B cell (primary cell): ENCODE measurements at regions of chr17 and their contacts with region 1.

Region 1: GRCh38 chr17:3913531-3914311 is 2.5 kb downstream of the P2RX1 start:
- DNase-seq: peak; percentile 93
- ATAC-seq: peak; percentile 57
- H3K4me3 ChIP-seq: peak overlapping the region; percentile 48 to 72 (median 57)
- H3K4me3 Mint-ChIP-seq: peak overlapping the region; percentile 90
- H3K27ac ChIP-seq: peak overlapping the region; percentile 100
- H3K27ac Mint-ChIP-seq: peak overlapping the region; percentile 98
- H3K4me1 ChIP-seq: peaks cover 72 to 92% of the 10 kb centered on the region in 2 donors
- H3K4me1 Mint-ChIP-seq: peaks cover 80% of the 10 kb centered on the region
- H3K27me3 ChIP-seq: no peaks in the 10 kb centered on the region
- H3K27me3 Mint-ChIP-seq: no peaks in the 10 kb centered on the region
- CTCF ChIP-seq: peak; percentile 97

Region 2: GRCh38 chr17:3695723-3696411 is 217.9 kb before region 1 on chr17 and contains the start of gene P2RX5:
- CTCF ChIA-PET with region 1: interaction called, 3 read pairs
- POLR2A ChIA-PET with region 1: no interaction called
- intact Hi-C with region 1: loop called (anchors 5 kb)
- DNase-seq: peak; percentile 80
- ATAC-seq: peak; percentile 52
- H3K4me3 ChIP-seq: peak within 1 kb of the TSS; percentile 58 to 93 (median 83)
- H3K4me3 Mint-ChIP-seq: peak within 1 kb of the TSS; percentile 100
- H3K27ac ChIP-seq: peak within 1 kb of the TSS; percentile 76 to 91
- H3K27ac Mint-ChIP-seq: peak within 1 kb of the TSS; percentile 99
- H3K4me1 ChIP-seq: peaks cover 35 to 65% of the 10 kb centered on the region in 2 donors
- H3K4me1 Mint-ChIP-seq: peaks cover 61% of the 10 kb centered on the region
- H3K27me3 ChIP-seq: no peaks in the 10 kb centered on the region
- H3K27me3 Mint-ChIP-seq: no peaks in the 10 kb centered on the region
- CTCF ChIP-seq: no peak
- total RNA-seq, gene P2RX5: 405 and 410 TPM in 2 replicates

Region 3: GRCh38 chr17:3845621-3846441 is 67.9 kb before region 1 on chr17 and contains the start of gene NCBP3:
- CTCF ChIA-PET with region 1: interaction called, 16 read pairs
- POLR2A ChIA-PET with region 1: interaction called, 3 read pairs
- intact Hi-C with region 1: loop called (anchors 1 kb)
- DNase-seq: peak; percentile 96
- ATAC-seq: peak; percentile 97
- H3K4me3 ChIP-seq: peak within 1 kb of the TSS; percentile 54 to 96 (median 90)
- H3K4me3 Mint-ChIP-seq: peak within 1 kb of the TSS; percentile 92
- H3K27ac ChIP-seq: peak within 1 kb of the TSS; percentile 72 to 94
- H3K27ac Mint-ChIP-seq: peak within 1 kb of the TSS; percentile 86
- H3K4me1 ChIP-seq: peaks cover 10 to 20% of the 10 kb centered on the region in 2 donors
- H3K4me1 Mint-ChIP-seq: peaks cover 23% of the 10 kb centered on the region
- H3K27me3 ChIP-seq: no peaks in the 10 kb centered on the region
- H3K27me3 Mint-ChIP-seq: no peaks in the 10 kb centered on the region
- CTCF ChIP-seq: peak; percentile 90
- total RNA-seq, gene NCBP3: 70.7 and 71.7 TPM in 2 replicates

Region 4: GRCh38 chr17:3893003-3893719 is 20.6 kb before region 1 on chr17 and contains the start of gene CAMKK1:
- CTCF ChIA-PET with region 1: interaction called, 48 read pairs
- POLR2A ChIA-PET with region 1: interaction called, 15 read pairs
- intact Hi-C with region 1: loop called (anchors 1 kb)
- DNase-seq: peak; percentile 95
- ATAC-seq: peak; percentile 86
- H3K4me3 ChIP-seq: peak within 1 kb of the TSS; percentile 14 to 75 (median 64)
- H3K4me3 Mint-ChIP-seq: peak within 1 kb of the TSS; percentile 93
- H3K27ac ChIP-seq: peak within 1 kb of the TSS; percentile 56 to 57
- H3K27ac Mint-ChIP-seq: peak within 1 kb of the TSS; percentile 89
- H3K4me1 ChIP-seq: peaks cover 20 to 42% of the 10 kb centered on the region in 2 donors
- H3K4me1 Mint-ChIP-seq: peaks cover 40% of the 10 kb centered on the region
- H3K27me3 ChIP-seq: no peaks in the 10 kb centered on the region
- H3K27me3 Mint-ChIP-seq: no peaks in the 10 kb centered on the region
- CTCF ChIP-seq: no peak
- total RNA-seq, gene CAMKK1: 35.9 and 37.1 TPM in 2 replicates

Region 5: DNA sequence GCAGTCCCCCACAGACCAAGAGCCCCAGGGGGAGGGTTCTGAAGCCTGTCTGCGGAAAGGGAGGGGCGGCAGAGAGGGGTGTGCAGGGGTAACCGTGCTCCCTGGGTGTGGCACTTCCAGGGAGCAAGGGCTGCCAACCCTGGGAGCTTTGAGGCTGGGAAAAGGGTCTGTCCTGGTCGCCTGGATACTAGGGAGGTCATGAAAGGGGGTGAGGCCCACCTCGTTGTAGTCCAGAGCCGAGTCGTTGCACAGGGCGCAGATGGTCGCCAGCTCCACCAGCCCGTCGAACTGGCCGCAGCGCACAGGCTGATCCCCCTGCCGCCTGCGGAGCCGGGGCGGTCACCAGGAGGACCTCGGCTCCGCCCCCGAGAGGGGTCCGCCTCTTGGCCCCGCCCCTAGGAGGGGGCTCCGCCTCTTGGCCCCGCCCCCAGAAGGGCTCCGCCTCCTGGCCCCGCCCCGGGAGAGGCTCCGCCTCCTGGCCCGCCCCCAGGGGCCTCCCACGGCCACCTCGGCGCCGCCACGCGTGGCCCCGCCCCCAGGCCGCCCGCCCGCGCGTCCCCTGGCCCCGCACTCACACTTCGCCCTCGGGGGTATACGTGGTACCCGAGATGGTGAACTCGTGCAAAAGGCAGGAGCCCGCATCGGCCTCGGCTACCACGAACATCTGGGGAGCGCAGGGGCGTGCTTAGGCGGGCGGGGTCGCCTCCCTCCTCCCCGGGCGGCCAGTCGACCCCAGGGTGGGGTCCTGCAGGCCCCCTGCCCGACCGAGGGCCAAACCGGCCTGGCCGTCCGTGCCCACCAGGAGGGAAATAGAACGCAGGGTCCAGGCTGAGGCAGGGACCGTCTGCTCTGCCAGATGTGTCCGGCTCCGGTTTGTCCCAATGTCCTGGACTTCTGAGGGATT is 31.0 kb after region 1 on chr17:
- CTCF ChIA-PET with region 1: interaction called, 10 read pairs
- POLR2A ChIA-PET with region 1: interaction called, 10 read pairs
- intact Hi-C with region 1: no loop called
- DNase-seq: peak; percentile 48
- ATAC-seq: peak; percentile 82
- H3K4me3 ChIP-seq: no peak overlapping the region
- H3K4me3 Mint-ChIP-seq: no peak overlapping the region
- H3K27ac ChIP-seq: no peak overlapping the region
- H3K27ac Mint-ChIP-seq: peak overlapping the region; percentile 26
- H3K4me1 ChIP-seq: no peaks in the 10 kb centered on the region
- H3K4me1 Mint-ChIP-seq: no peaks in the 10 kb centered on the region
- H3K27me3 ChIP-seq: no peaks in the 10 kb centered on the region
- H3K27me3 Mint-ChIP-seq: no peaks in the 10 kb centered on the region
- CTCF ChIP-seq: no peak

Region 6: GRCh38 chr17:3965118-3965803 is 51.5 kb after region 1 on chr17:
- CTCF ChIA-PET with region 1: interaction called, 157 read pairs
- POLR2A ChIA-PET with region 1: interaction called, 64 read pairs
- intact Hi-C with region 1: loop called (anchors 1 kb)
- DNase-seq: peak; percentile 85
- ATAC-seq: peak; percentile 35
- H3K4me3 ChIP-seq: peak overlapping the region; percentile 13 to 98 (median 86)
- H3K4me3 Mint-ChIP-seq: peak overlapping the region; percentile 94
- H3K27ac ChIP-seq: peak overlapping the region; percentile 83 to 88
- H3K27ac Mint-ChIP-seq: peak overlapping the region; percentile 94
- H3K4me1 ChIP-seq: peaks cover 61 to 77% of the 10 kb centered on the region in 2 donors
- H3K4me1 Mint-ChIP-seq: peaks cover 62% of the 10 kb centered on the region
- H3K27me3 ChIP-seq: no peaks in the 10 kb centered on the region
- H3K27me3 Mint-ChIP-seq: no peaks in the 10 kb centered on the region
- CTCF ChIP-seq: no peak

Region 7: DNA sequence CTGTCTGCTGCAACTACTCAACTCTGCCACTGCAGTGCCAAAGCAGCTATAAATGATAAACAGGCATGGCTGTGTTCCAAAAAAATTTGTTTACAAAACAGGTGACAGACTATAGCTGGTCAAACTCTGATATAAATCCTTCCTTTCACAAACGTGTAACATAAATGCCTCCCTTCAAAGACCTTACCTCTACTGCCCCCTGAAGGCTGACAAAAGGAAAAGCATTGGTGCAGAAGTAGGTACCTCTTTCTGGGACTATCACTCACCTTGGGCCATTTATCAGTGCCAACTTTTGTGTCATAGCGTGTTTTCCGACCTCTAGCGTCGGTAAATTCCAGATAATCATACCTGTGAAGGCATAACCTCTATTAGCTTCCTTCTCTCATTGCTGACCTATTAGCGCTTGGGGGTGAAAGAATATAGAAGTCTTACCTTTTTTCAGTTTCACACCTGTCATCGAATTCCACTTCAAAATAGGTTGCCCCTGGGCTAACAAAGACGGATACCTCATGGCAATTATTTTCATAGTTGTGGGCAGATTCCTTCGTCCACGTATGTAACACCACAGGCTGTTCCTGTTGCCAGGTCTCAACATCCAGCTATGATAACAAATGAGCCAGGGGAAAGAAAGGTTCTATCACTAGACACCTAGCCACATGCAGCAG is 161.2 kb after region 1 on chr17:
- CTCF ChIA-PET with region 1: interaction called, 16 read pairs
- POLR2A ChIA-PET with region 1: no interaction called
- intact Hi-C with region 1: loop called (anchors 1 kb)
- DNase-seq: peak; percentile 75
- ATAC-seq: peak; percentile 53
- H3K4me3 ChIP-seq: no peak overlapping the region
- H3K4me3 Mint-ChIP-seq: peak overlapping the region; percentile 75
- H3K27ac ChIP-seq: peak overlapping the region; percentile 20 to 54
- H3K27ac Mint-ChIP-seq: peak overlapping the region; percentile 76
- H3K4me1 ChIP-seq: peaks cover 13 to 17% of the 10 kb centered on the region in 2 donors
- H3K4me1 Mint-ChIP-seq: peaks cover 18% of the 10 kb centered on the region
- H3K27me3 ChIP-seq: no peaks in the 10 kb centered on the region
- H3K27me3 Mint-ChIP-seq: no peaks in the 10 kb centered on the region
- CTCF ChIP-seq: peak; percentile 78

Region 8: GRCh38 chr17:4087906-4088693 is 174.4 kb after region 1 on chr17:
- CTCF ChIA-PET with region 1: no interaction called
- POLR2A ChIA-PET with region 1: no interaction called
- intact Hi-C with region 1: no loop called
- DNase-seq: no peak
- ATAC-seq: no peak
- H3K4me3 ChIP-seq: no peak overlapping the region
- H3K4me3 Mint-ChIP-seq: no peak overlapping the region
- H3K27ac ChIP-seq: no peak overlapping the region
- H3K27ac Mint-ChIP-seq: no peak overlapping the region
- H3K4me1 ChIP-seq: no peaks in the 10 kb centered on the region
- H3K4me1 Mint-ChIP-seq: peaks cover 1% of the 10 kb centered on the region
- H3K27me3 ChIP-seq: no peaks in the 10 kb centered on the region
- H3K27me3 Mint-ChIP-seq: no peaks in the 10 kb centered on the region
- CTCF ChIP-seq: no peak